ENCODE measurements at regions of chr15 and their contacts with region 1.

Region 1: GRCh38 chr15:75201609-75202250 is at the start of gene C15orf39:
- DNase-seq: peak; percentile 77
- H3K4me3 Mint-ChIP-seq: peak within 1 kb of the TSS; percentile 92
- H3K27ac Mint-ChIP-seq: peak within 1 kb of the TSS; percentile 93
- H3K4me1 Mint-ChIP-seq: peaks cover 67% of the 10 kb centered on the region
- H3K27me3 Mint-ChIP-seq: no peaks in the 10 kb centered on the region
- total RNA-seq, gene C15orf39: 47.0 to 48.6 TPM

Region 2: DNA sequence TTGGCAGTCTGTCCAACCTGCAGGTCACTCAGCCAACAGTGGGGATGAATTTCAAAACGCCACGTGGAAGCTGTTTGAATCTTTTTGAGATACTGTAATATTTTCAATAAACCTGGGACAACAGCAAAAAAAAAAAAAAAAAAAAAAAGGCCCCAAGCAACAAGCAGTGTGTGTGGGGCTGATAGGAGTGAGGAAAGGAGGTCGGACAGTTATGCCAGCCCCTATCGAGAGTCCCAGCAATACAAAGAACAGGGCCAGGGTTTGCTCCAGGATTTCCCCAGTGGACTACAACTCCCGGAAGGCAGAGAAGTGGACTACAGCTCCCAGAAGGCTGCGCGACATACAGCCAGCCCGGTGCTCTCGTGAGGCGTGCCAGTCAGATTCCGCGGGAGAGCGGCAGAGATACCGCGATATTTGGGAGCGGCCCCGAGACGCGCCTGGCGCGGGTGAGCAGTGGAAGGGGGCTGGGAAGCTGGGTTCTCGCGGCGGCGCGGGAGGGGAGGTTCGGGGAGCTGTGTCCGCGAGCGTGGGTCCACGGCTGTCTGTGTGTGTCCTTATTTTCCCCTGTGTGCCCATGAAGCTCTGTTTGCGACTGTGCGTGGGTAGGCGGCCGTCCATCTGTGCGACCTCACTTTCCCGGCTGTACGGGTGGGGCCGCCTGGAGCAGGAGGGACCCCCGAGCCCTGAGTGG is 178.4 kb before region 1 on chr15 and contains the start of gene PPCDC:
- CTCF ChIA-PET with region 1: interaction called, 10 read pairs
- POLR2A ChIA-PET with region 1: no interaction called
- DNase-seq: peak; percentile 97
- H3K4me3 Mint-ChIP-seq: peak within 1 kb of the TSS; percentile 97
- H3K27ac Mint-ChIP-seq: peak within 1 kb of the TSS; percentile 99
- H3K4me1 Mint-ChIP-seq: peaks cover 32% of the 10 kb centered on the region
- H3K27me3 Mint-ChIP-seq: no peaks in the 10 kb centered on the region
- total RNA-seq, gene PPCDC: 19.6 to 20.7 TPM

Region 3: DNA sequence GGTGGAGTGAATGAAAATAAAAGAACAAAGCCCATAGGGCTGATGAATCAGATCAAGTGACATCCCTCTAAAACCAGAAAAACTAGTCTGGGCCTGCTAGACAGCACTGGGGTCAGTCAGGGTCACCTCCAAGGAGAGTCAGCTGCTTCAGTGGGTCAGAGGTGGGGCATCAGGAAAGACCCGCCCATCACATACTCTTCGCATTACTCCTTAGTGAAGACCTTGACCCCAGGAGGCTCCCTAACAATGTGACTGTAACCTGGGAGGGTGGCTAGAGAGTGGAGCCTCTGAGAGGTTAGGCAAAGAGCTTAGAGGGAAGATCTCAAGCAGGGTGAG is 165.4 kb before region 1 on chr15:
- CTCF ChIA-PET with region 1: interaction called, 34 read pairs
- POLR2A ChIA-PET with region 1: interaction called, 3 read pairs
- DNase-seq: no peak
- H3K4me3 Mint-ChIP-seq: no peak overlapping the region
- H3K27ac Mint-ChIP-seq: no peak overlapping the region
- H3K4me1 Mint-ChIP-seq: peaks cover 49% of the 10 kb centered on the region
- H3K27me3 Mint-ChIP-seq: no peaks in the 10 kb centered on the region

Region 4: DNA sequence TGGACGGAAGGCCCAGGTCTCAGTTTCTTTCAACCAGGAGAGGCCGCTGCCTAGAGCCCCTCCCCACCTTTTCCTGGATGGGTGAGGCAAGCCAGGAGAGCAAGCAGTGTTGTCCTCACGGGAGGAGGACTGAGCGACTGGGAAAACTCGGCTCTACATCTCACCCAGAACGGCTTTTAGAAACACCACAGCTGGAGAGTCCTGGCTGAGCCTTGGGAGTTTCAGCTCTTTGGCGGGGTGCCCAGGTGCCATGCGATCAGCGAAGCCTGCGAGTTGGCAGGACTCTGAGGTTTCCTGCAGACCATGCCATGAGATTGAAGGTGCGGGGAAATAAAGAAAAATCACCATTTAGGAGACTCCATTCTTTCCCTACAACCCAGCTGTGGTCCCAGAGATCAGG is 152.3 kb before region 1 on chr15:
- CTCF ChIA-PET with region 1: interaction called, 11 read pairs
- POLR2A ChIA-PET with region 1: interaction called, 9 read pairs
- DNase-seq: no peak
- H3K4me3 Mint-ChIP-seq: no peak overlapping the region
- H3K27ac Mint-ChIP-seq: no peak overlapping the region
- H3K4me1 Mint-ChIP-seq: peaks cover 34% of the 10 kb centered on the region
- H3K27me3 Mint-ChIP-seq: no peaks in the 10 kb centered on the region

Region 5: DNA sequence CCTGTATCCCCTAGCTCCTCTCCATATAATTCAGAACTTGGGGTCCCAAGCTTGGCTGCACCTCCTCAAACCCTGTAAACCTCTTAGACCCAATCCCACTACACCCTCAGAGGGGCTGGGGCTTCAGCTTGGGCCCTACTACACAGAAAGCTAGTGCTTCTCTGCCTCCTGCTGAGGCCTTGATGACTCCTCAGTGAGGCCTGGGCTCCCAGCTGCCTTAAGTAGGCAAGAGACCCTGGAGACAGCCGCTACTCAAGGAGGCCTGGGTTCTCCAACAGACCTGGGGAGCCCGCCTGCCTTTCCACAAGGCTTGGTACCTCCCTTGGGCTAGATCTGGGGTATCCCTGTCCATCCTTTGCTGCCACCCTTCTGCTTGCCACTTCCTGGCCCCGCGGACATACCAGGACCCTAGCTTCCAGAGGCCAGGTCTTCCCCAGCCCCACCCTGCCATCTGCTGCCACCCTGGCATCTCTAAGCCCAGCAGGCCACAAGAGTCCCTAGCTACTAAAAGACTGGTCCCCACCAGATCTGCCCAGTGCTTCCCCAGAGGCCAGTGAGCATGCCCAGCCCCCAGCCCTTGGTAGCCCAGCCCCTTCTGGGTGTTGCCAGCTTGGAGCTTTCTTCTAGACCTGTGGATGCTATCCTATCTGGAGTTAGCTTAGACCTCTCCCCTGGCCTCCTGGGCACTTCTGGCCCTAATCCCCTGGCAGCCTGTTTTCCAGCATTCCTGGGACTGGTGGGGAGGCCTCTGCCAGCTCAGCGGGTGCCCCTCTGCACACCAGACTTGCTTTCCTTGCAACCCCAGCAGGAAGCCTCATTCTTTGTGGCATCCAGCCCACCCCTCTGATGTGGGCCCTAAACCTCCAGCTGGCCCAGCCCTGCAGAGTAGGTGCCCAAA is 13.6 kb after region 1 on chr15:
- CTCF ChIA-PET with region 1: interaction called, 11 read pairs
- POLR2A ChIA-PET with region 1: no interaction called
- DNase-seq: no peak
- H3K4me3 Mint-ChIP-seq: no peak overlapping the region
- H3K27ac Mint-ChIP-seq: no peak overlapping the region
- H3K4me1 Mint-ChIP-seq: peaks cover 3% of the 10 kb centered on the region
- H3K27me3 Mint-ChIP-seq: no peaks in the 10 kb centered on the region

Measured in activated CD4-positive, alpha-beta T cell treated with anti-CD3 and anti-CD28 coated beads, Interleukin-2, amount 10 ng/mL, durations not matched to agents 7 days and 5 days (primary cell).